ENCODE measurements at regions of chr2 and their contacts with region 1.

Region 1: GRCh38 chr2:84495539-84496146 is 20.7 kb upstream of the DNAH6 start:
- DNase-seq: no peak
- ATAC-seq: peak; percentile 93
- H3K4me3 ChIP-seq: no peak overlapping the region
- H3K27ac ChIP-seq: no peak overlapping the region
- H3K4me1 ChIP-seq: no peaks in the 10 kb centered on the region
- H3K27me3 ChIP-seq: no peaks in the 10 kb centered on the region
- CTCF ChIP-seq: peak; percentile 78

Region 2: DNA sequence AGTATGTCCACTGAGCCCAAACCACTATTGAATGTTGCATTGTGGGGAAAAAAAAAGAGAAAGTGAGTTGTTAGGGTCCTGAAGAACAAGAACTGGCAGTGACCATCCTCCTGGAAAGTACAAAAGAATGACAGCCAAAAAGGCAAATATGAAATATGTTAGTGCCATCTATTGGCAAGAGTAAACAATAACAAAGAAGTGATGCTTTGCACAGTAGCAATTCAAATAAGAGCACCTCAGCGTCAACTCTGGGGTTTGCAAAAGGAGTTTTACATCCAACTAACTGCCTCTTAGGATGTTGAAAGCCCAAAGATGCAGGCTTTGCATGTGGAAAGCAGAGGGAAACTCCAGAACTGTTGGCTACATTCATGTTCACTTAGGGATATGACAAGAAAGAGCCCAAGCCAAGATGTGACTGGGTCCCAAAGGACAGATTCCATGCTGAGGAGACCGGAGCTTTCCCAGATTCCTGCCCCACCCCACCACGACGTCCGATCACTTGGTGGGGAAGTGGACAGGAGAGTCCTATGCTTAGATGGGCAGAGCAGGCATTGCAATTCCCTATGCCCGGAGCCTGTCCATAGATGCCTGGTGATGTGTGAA is 369.6 kb after region 1 on chr2:
- intact Hi-C with region 1: loop called (anchors 10 kb)
- DNase-seq: no peak
- ATAC-seq: peak; percentile 51
- H3K4me3 ChIP-seq: no peak overlapping the region
- H3K27ac ChIP-seq: no peak overlapping the region
- H3K4me1 ChIP-seq: no peaks in the 10 kb centered on the region
- H3K27me3 ChIP-seq: no peaks in the 10 kb centered on the region
- CTCF ChIP-seq: peak; percentile 40

Region 3: GRCh38 chr2:84939426-84940087 is 443.9 kb after region 1 on chr2:
- intact Hi-C with region 1: loop called (anchors 10 kb)
- DNase-seq: no peak
- ATAC-seq: peak; percentile 84
- H3K4me3 ChIP-seq: no peak overlapping the region
- H3K27ac ChIP-seq: peak overlapping the region; percentile 36
- H3K4me1 ChIP-seq: no peaks in the 10 kb centered on the region
- H3K27me3 ChIP-seq: no peaks in the 10 kb centered on the region
- CTCF ChIP-seq: no peak

Measured in upper lobe of right lung (tissue), 1 donor.